Common myeloid progenitor, CD34-positive (primary cell): ENCODE measurements at regions of chr2 and their contacts with region 1.

Region 1: DNA sequence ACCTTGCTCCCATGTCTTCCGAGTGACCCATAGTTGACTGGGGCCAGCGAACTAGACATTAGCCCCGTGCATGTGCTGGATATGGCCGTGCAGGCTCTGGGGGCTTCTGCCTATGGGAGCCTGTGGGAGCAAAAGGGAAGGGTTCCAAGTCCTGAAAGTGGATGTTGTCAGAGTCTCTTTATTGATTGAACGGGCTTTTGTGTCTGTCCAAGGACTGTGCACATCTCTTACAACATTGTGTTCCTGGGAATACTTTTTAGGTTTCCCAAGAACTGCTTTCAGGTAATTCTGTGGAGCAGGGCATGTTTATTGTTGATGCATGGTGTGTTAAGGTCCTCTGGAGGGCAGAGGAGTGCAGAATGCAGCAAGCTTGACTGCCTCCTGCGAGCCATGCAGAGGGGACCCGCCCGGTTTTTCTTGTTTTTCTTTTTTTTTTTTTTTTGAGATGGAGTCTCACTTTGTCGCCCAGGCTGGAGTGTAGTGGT is 5.0 kb downstream of the RNF144A start:
- DNase-seq: peak in 2 of 3 donors; percentile 67
- H3K4me3 ChIP-seq: no peak overlapping the region
- H3K27ac ChIP-seq: no peak overlapping the region
- H3K4me1 ChIP-seq: peaks cover 2 to 62% (median 54%) of the 10 kb centered on the region in 4 experiments
- H3K27me3 ChIP-seq: no peaks in the 10 kb centered on the region

Region 2: DNA sequence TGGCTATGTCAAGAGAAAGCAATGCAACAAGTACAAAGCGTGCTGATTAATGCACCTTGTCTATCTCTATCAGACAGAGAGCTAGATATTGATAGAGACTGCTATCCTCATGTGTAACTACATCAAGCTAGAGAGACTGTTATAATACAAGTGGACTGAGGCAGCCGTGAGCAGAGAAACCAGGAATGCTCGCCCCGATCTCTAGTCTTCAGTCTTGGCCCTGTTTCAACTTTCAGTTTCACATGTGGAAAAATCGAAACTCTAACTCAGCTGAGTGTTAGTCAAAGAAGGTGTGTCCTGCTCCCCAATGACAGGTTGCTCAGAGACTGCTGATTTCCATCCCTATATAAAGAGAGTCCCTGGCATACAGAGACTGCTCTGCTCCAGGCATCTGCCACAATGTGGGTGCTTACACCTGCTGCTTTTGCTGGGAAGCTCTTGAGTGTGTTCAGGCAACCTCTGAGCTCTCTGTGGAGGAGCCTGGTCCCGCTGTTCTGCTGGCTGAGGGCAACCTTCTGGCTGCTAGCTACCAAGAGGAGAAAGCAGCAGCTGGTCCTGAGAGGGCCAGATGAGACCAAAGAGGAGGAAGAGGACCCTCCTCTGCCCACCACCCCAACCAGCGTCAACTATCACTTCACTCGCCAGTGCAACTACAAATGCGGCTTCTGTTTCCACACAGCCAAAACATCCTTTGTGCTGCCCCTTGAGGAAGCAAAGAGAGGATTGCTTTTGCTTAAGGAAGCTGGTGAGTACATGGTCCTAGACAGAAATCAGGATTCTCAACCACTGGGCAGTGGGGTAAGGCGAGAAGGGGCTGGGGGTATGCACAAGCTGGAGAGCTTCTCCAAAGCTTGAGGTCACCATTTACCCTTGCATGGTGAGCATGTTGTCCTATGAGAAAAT is 44.6 kb before region 1 on chr2 and contains the start of gene RSAD2:
- CTCF ChIA-PET with region 1: no interaction called
- POLR2A ChIA-PET with region 1: no interaction called
- DNase-seq: peak; percentile 68 to 86 (median 81)
- H3K4me3 ChIP-seq: peak within 1 kb of the TSS in 6 of 7 experiments; percentile 58 to 89 (median 74)
- H3K27ac ChIP-seq: peak within 1 kb of the TSS; percentile 16 to 67
- H3K4me1 ChIP-seq: peaks cover 27 to 74% (median 58%) of the 10 kb centered on the region in 4 experiments
- H3K27me3 ChIP-seq: no peaks in the 10 kb centered on the region

Region 3: DNA sequence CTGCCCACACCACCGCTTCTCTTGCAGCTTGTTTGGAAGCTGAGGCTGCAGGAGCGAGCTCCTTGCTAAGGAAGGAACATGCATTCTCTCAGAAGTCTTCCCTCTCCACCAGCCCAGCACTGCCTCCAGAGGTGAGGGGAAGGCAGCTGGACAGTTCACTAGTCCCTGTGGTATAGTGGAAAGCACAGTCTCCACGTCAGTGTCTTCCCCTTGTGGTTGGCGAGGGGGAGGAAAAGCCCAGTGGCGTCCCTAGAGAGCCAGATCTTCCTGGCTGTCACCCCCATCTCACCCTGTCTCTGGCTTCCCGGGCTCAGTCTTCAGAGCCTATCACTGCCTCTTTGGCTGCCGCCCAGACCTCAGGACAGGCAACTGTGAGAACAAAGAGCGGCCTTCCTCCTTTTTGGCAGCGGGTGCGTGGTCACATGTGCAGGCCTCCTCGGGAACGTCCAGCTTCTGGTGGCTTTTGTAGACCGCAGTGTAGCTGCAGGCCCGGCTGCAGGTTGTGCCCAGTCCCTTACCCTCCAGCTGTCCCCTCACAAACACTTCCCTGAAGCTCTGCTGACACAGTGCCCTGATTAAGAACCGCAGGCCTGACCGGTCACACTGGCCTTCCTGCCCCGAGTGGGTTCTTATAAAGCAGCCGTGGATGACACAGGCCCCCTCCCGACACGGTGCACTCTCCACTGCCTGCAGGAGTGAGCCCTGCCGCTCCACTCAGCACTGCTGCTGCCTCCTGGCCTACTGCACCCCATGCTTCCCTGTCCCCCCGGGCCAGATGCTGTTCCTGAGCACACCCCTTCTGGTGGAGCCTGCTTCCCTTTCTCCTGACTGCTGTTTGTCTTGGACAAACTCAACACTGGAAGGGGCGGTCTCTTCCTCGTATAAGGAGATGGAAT is 85.9 kb after region 1 on chr2:
- CTCF ChIA-PET with region 1: interaction called, 18 read pairs
- POLR2A ChIA-PET with region 1: no interaction called
- DNase-seq: peak; percentile 75 to 85 (median 81)
- H3K4me3 ChIP-seq: peak overlapping the region in 4 of 7 experiments; percentile 3 to 58 (median 31)
- H3K27ac ChIP-seq: peak overlapping the region in 1 of 2 experiments; percentile 37
- H3K4me1 ChIP-seq: peaks cover 11 to 70% (median 59%) of the 10 kb centered on the region in 4 experiments
- H3K27me3 ChIP-seq: no peaks in the 10 kb centered on the region